Activated CD4-positive, alpha-beta T cell treated with anti-CD3 and anti-CD28 coated beads, Interleukin-2, amount 10 ng/mL, durations not matched to agents 24 days and 14 days (primary cell): ENCODE measurements at regions of chr5 and their contacts with region 1.

Region 1: GRCh38 chr5:156920042-156920860 is 42.8 kb downstream of the TIMD4 start:
- DNase-seq: peak; percentile 90
- H3K4me3 Mint-ChIP-seq: peak overlapping the region; percentile 87
- H3K27ac Mint-ChIP-seq: peak overlapping the region; percentile 96
- H3K4me1 Mint-ChIP-seq: peaks cover 61% of the 10 kb centered on the region
- H3K27me3 Mint-ChIP-seq: no peaks in the 10 kb centered on the region

Region 2: GRCh38 chr5:156934450-156935211 is 14.4 kb after region 1 on chr5:
- intact Hi-C with region 1: loop called (anchors 1 kb)
- DNase-seq: peak; percentile 90
- H3K4me3 Mint-ChIP-seq: peak overlapping the region; percentile 46
- H3K27ac Mint-ChIP-seq: peak overlapping the region; percentile 93
- H3K4me1 Mint-ChIP-seq: peaks cover 76% of the 10 kb centered on the region
- H3K27me3 Mint-ChIP-seq: no peaks in the 10 kb centered on the region

Region 3: DNA sequence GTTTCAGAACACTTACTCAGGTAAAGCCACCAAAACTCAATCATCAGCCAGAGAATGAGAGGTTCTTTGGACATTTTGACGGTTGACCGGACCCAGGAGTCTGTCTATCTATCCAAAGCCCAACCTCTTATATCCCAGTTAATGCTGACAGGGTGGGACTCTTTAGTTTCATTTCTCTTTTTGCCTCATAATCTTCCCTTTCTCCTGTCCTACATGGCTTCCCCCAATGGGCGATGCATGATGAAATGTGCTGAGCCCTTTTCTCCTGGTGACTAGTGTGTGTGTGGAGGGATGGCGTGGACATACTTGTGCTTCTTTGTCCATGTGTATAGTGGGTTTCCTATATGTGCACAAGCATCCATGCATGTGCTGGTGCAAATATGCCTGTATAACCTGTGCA is 42.9 kb after region 1 on chr5 and contains the start of gene TIMD4:
- intact Hi-C with region 1: no loop called
- DNase-seq: no peak
- H3K4me3 Mint-ChIP-seq: no peak within 1 kb of the TSS
- H3K27ac Mint-ChIP-seq: no peak within 1 kb of the TSS
- H3K4me1 Mint-ChIP-seq: peaks cover 6% of the 10 kb centered on the region
- H3K27me3 Mint-ChIP-seq: no peaks in the 10 kb centered on the region
- total RNA-seq, gene TIMD4: 13.9 and 15.1 TPM in 2 replicates

Region 4: DNA sequence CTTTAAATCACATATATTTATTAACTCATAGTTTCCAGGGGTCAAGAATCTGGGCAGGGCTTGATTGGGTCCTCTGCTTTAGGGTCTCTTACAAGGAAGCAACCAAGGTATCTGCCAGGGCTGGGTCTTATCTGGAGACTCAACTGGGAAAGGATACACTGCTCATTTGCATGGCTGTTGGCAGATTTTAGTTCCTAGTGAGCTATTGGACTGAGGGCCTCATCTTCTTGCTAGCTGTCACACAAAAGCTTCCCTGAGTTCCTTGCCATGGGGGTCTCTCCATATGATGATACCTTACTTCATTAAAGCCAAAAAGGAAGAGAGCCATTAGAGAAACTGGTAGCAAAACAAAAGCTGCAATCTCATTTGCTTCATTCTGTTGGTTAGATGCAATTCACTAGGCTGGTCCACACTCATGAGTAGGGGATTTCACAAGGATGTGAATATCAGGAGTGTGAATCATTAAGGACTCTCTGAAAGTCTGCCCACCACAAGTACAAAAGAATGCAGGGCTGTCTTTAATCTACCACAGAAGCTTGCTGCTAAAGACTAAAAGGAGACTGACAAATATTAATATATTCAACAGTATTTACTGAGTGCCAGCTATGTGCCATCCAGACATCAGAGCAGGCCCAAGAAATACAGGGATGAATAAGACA is 84.8 kb after region 1 on chr5:
- intact Hi-C with region 1: loop called (anchors 1 kb)
- DNase-seq: no peak
- H3K4me3 Mint-ChIP-seq: no peak overlapping the region
- H3K27ac Mint-ChIP-seq: peak overlapping the region; percentile 76
- H3K4me1 Mint-ChIP-seq: peaks cover 21% of the 10 kb centered on the region
- H3K27me3 Mint-ChIP-seq: no peaks in the 10 kb centered on the region

Region 5: DNA sequence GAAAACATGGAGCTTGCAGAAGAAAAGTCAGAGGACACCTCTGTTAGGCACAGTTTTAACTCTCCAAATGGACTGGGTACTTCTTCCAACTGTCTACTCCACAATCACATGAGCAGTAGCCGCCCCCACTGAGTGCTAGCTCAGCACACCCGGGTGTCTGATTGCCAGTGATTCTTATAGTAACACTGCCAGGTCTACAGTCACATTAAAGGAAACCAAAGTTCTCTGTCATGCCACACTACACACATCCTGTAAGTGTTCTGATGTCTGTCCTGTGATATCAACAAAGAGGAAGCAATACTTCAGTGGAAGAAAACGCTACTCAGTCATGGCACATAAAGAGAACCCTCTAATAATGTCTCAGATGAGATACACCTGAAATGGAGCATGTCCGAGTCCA is 188.7 kb after region 1 on chr5 and contains the start of gene HAVCR2:
- intact Hi-C with region 1: loop called (anchors 1 kb)
- DNase-seq: peak; percentile 90
- H3K4me3 Mint-ChIP-seq: peak within 1 kb of the TSS; percentile 97
- H3K27ac Mint-ChIP-seq: peak within 1 kb of the TSS; percentile 98
- H3K4me1 Mint-ChIP-seq: peaks cover 58% of the 10 kb centered on the region
- H3K27me3 Mint-ChIP-seq: no peaks in the 10 kb centered on the region
- total RNA-seq, gene HAVCR2: 70.0 and 73.1 TPM in 2 replicates

Region 6: DNA sequence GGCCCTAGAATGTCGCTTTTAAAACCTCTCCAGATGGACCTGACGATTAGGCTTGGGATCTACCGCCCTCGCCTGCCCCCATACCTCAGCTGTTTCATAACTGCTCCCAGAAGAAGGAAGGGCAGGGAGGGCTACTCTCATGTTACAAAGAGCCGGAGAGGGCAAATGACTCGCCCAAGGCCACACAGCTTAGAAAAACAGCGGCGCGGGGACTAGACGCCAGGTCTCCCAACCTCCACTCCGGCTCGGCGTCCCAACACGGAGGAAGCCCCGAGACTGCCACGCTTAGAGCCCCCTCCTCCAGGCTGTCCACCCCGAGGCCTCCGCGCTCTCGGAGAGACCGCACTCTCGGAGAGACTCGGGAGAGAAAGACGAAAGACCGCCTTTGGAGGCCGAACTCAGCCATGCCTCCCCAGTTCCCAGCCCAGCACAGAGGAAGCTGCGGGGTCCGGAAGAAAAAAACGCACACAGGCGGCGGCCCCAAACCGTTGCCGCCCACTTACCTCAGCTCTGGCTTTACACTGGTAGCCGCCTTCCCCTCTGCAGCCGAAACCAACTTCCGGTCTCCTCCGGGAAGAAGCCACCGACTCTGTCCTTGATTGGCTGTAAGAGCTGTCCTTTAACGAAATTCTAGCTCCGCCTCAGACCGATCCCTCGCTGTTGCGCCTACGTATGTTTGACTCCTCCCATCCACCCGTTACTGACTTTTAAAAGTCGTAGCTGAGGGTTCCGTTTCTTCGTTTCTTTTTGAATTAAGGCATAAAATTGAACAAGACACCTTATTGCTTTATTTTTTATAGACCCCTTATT is 222.3 kb after region 1 on chr5 and contains the start of gene MED7:
- intact Hi-C with region 1: loop called (anchors 1 kb)
- DNase-seq: peak; percentile 98
- H3K4me3 Mint-ChIP-seq: peak within 1 kb of the TSS; percentile 95
- H3K27ac Mint-ChIP-seq: peak within 1 kb of the TSS; percentile 99
- H3K4me1 Mint-ChIP-seq: peaks cover 45% of the 10 kb centered on the region
- H3K27me3 Mint-ChIP-seq: no peaks in the 10 kb centered on the region
- total RNA-seq, gene MED7: 13.2 and 14.6 TPM in 2 replicates

Region 7: DNA sequence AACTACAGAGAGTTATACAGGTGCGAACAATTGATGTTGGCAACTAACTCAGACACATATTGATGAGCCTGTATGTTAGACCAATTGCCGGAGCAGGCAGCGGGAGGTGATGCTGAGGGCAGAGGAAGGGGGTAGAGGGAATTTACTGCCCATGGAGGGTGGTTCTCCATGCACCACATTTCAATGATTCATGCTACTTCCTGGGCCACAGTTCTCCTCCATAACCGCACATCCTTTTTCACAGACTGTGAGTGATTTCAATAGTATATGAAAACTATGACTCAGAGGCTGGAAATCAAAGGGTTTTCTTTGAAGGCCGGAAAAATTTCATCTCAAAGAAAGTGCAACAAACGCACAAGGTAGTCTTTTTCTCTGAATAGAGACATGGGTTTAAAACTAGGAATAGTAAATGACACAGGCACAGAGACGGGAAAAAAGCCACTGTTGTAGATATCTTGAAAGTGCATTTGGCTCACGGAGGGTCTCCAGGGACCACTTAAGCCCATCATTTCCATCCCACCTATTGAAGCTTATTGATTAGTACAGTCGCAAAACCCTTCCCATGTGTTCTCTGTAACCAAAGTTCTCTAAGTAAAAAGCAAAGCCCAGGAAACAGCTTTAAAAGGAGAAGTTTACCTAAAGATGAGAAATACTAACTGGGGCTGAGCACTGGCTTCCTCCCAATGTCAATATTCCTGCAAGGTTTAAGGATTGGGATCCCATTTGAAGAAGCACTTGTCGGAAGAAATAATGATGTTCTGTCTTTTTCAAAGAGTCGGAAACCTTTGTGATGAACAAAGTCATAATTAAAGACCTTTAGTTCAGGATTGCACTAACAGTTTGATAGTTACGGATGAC is 683.3 kb after region 1 on chr5:
- intact Hi-C with region 1: loop called (anchors 5 kb)
- DNase-seq: peak; percentile 92
- H3K4me3 Mint-ChIP-seq: peak overlapping the region; percentile 65
- H3K27ac Mint-ChIP-seq: peak overlapping the region; percentile 88
- H3K4me1 Mint-ChIP-seq: peaks cover 73% of the 10 kb centered on the region
- H3K27me3 Mint-ChIP-seq: no peaks in the 10 kb centered on the region